PC-9 (cell line): ENCODE measurements at regions of chr1 and their contacts with region 1.

Region 1: DNA sequence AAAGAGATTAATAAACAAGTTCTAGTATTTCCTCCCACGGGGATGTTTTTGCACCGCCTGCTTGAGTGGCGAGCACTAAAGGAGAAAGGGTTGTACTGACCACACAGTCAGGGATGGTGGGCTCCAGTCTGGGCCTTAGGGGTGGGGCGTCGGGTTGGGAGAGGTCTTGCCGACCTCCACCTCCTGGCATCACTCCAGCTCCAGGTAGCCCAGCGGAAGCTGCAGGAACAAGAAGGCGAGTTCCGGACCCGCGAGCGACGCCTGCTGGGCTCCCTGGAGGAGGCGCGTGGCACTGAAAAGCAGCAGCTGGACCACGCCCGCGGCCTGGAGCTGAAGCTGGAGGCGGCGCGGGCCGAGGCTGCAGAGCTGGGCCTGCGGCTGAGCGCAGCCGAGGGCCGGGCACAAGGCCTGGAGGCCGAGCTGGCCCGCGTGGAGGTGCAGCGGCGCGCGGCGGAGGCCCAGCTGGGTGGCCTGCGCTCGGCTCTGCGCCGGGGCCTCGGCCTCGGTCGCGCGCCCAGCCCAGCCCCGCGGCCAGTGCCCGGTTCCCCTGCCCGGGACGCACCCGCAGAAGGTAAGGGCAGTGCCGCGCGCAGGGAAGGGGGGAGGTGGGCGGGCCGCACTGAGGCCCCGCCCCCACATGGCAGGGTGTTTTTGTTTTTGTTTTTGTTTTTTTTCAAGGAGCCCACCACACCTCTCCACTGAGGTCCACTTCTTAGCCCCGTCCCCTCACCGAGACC is 19.7 kb downstream of the MFAP2 start:
- DNase-seq: peak; percentile 63 to 86
- H3K4me3 ChIP-seq: peak overlapping the region; percentile 44; the same call in 1 of the 2 replicates
- H3K27ac ChIP-seq: no peak overlapping the region
- H3K4me1 ChIP-seq: no peaks in the 10 kb centered on the region
- H3K27me3 ChIP-seq: no peaks in the 10 kb centered on the region
- CTCF ChIP-seq: peak; percentile 61

Region 2: GRCh38 chr1:16946646-16947045 is 14.1 kb before region 1 on chr1:
- CTCF ChIA-PET with region 1: interaction called, 11 read pairs
- POLR2A ChIA-PET with region 1: interaction called, 9 read pairs
- intact Hi-C with region 1: no loop called
- DNase-seq: no peak
- H3K4me3 ChIP-seq: no peak overlapping the region
- H3K27ac ChIP-seq: no peak overlapping the region
- H3K4me1 ChIP-seq: no peaks in the 10 kb centered on the region
- H3K27me3 ChIP-seq: no peaks in the 10 kb centered on the region
- CTCF ChIP-seq: no peak

Region 3: DNA sequence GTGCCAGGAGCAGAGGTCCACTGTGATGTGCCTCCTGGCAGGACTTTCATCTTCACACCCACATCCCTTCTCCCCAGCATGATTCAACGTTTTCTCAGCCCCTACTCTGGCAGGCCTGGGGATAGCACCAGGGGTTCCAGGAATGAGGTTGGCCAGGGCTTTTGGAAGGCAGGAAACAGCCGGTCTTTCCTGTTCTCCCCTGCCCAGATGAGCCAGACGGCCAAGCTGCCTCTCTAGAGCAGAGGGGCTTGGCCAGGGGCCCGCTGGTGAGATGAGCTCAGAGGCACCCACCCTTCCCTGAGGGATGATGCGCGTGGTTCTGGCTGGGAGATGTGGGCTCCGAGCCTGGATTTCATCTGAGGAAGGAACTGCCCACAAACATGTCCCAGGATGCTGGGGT is 24.0 kb after region 1 on chr1:
- CTCF ChIA-PET with region 1: interaction called, 12 read pairs
- POLR2A ChIA-PET with region 1: no interaction called
- intact Hi-C with region 1: no loop called
- DNase-seq: peak; percentile 70 to 81
- H3K4me3 ChIP-seq: no peak overlapping the region
- H3K27ac ChIP-seq: peak overlapping the region; percentile 43; the same call in 1 of the 2 replicates
- H3K4me1 ChIP-seq: peaks cover 11% of the 10 kb centered on the region
- H3K27me3 ChIP-seq: no peaks in the 10 kb centered on the region
- CTCF ChIP-seq: no peak

Region 4: GRCh38 chr1:17011439-17012307 is 50.9 kb after region 1 on chr1 and contains the start of gene ATP13A2:
- CTCF ChIA-PET with region 1: interaction called, 3 read pairs
- POLR2A ChIA-PET with region 1: no interaction called
- intact Hi-C with region 1: loop called (anchors 2 kb)
- DNase-seq: peak; percentile 65 to 88
- H3K4me3 ChIP-seq: peak within 1 kb of the TSS; percentile 69
- H3K27ac ChIP-seq: no peak within 1 kb of the TSS
- H3K4me1 ChIP-seq: no peaks in the 10 kb centered on the region
- H3K27me3 ChIP-seq: no peaks in the 10 kb centered on the region
- CTCF ChIP-seq: no peak
- total RNA-seq, gene ATP13A2: 39.9 and 43.6 TPM in 2 replicates

Region 5: DNA sequence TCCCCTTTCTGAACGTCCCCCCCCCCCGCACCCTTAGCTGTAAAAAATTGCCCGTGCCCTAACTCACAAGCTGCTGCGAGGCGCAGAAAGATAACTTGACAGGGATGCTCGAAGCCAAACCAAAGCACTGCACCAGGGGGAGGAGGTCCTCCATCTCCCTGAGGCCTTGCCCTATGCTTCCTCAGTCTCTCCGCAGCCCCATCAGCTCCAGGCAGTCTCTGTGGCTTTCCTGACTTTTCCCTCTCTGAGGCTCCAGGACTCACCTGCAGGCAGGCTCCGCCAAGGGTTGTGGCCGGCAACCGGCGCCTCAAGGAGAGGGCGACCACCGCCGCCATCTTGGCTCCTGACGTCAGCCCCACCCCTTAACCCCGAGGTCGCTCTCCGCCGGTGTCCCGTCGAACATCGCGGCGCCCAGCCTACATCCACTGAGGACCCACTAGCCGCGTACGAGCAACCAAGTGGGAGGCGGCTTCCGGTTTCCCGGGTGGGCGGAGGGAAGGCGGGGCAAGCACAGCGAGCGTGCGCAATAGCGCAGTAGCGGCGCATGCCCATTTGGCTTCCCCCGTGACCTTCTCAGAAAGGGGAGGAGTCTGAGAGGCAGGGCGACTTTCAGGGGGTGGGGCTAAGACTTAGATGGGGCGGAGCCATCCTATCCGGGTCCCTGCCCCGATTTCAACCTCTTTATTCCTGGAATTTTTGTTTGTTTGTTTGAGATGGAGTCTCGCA is 93.1 kb after region 1 on chr1 and contains the start of gene SDHB:
- CTCF ChIA-PET with region 1: no interaction called
- POLR2A ChIA-PET with region 1: no interaction called
- intact Hi-C with region 1: no loop called
- DNase-seq: peak; percentile 84 to 98
- H3K4me3 ChIP-seq: peak within 1 kb of the TSS; percentile 71
- H3K27ac ChIP-seq: peak within 1 kb of the TSS; percentile 38; the same call in 1 of the 2 replicates
- H3K4me1 ChIP-seq: peaks cover 7% of the 10 kb centered on the region; the same call in 1 of the 2 replicates
- H3K27me3 ChIP-seq: no peaks in the 10 kb centered on the region
- CTCF ChIP-seq: no peak
- total RNA-seq, gene SDHB: 101 and 123 TPM in 2 replicates